Sigmoid colon (tissue), 7 donors: ENCODE measurements at regions of chr7 and their contacts with region 1.

Region 1: GRCh38 chr7:47179812-47180515 is 401.9 kb downstream of the TNS3 start:
- DNase-seq: no peak
- H3K4me3 ChIP-seq: no peak overlapping the region
- H3K27ac ChIP-seq: peak overlapping the region in 1 of 4 donors; percentile 21
- H3K4me1 ChIP-seq: peaks cover 0 to 54% (median 50%) of the 10 kb centered on the region in 4 donors
- H3K27me3 ChIP-seq: no peaks in the 10 kb centered on the region
- CTCF ChIP-seq: peak; percentile 42 to 83 (median 78)
- EP300 ChIP-seq: no peak
- POLR2A ChIP-seq: no peak

Region 2: GRCh38 chr7:45890902-45891461 is 1289.0 kb before region 1 on chr7:
- intact Hi-C with region 1: loop called (anchors 1 kb)
- DNase-seq: no peak
- H3K4me3 ChIP-seq: no peak overlapping the region
- H3K27ac ChIP-seq: no peak overlapping the region
- H3K4me1 ChIP-seq: peaks cover 0 to 11% (median 9%) of the 10 kb centered on the region in 4 donors
- H3K27me3 ChIP-seq: peaks cover 8 to 38% (median 33%) of the 10 kb centered on the region in 3 donors
- CTCF ChIP-seq: peak in 3 of 4 experiments; percentile 26 to 54 (median 46)
- EP300 ChIP-seq: no peak
- POLR2A ChIP-seq: no peak

Region 3: DNA sequence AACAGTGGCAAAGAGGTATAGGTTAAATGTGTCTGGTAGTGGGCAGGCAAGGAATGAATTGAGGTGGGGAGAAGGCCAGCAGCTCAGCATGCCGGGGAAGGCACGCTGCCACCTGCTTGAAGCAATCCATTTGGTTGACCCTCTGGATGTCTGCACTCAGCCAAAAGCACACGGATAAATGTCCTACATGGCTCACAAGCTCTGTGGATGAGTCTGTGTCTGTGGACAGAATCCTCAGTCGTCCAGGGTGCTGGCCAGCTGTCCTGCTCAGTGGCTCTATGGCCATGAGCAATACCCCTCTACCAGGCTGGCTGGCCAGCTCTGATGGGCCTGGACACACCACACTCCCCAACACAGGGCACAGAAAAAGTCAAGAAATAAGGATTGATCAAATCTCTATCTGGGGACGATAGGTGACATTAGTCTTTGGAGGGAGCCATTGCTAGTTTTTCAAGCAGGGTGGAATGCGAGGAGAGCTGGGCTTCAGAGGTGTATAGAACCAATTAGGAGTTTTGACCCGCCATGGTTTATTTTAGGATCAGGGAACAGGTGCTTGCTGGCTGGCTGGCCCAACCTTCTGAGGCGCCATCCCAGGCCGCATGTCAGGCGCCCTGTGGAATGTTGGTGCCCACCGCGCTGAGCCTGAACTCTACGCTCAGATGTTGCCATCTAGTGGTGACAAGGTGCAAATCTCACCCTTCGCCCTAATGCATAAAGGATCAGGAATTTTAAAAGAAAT is 91.5 kb before region 1 on chr7:
- intact Hi-C with region 1: loop called (anchors 5 kb)
- DNase-seq: peak; percentile 77
- H3K4me3 ChIP-seq: no peak overlapping the region
- H3K27ac ChIP-seq: no peak overlapping the region
- H3K4me1 ChIP-seq: peaks cover 0 to 10% (median 8%) of the 10 kb centered on the region in 4 donors
- H3K27me3 ChIP-seq: no peaks in the 10 kb centered on the region
- CTCF ChIP-seq: peak; percentile 73 to 87 (median 84)
- EP300 ChIP-seq: no peak
- POLR2A ChIP-seq: no peak

Region 4: GRCh38 chr7:47132471-47132870 is 47.5 kb before region 1 on chr7:
- intact Hi-C with region 1: no loop called
- DNase-seq: no peak
- H3K4me3 ChIP-seq: no peak overlapping the region
- H3K27ac ChIP-seq: no peak overlapping the region
- H3K4me1 ChIP-seq: peaks cover 0 to 7% (median 3%) of the 10 kb centered on the region in 4 donors
- H3K27me3 ChIP-seq: no peaks in the 10 kb centered on the region
- CTCF ChIP-seq: no peak
- EP300 ChIP-seq: no peak
- POLR2A ChIP-seq: no peak